CD4-positive, alpha-beta memory T cell (primary cell): ENCODE measurements at regions of chr16 and their contacts with region 1.

Region 1: DNA sequence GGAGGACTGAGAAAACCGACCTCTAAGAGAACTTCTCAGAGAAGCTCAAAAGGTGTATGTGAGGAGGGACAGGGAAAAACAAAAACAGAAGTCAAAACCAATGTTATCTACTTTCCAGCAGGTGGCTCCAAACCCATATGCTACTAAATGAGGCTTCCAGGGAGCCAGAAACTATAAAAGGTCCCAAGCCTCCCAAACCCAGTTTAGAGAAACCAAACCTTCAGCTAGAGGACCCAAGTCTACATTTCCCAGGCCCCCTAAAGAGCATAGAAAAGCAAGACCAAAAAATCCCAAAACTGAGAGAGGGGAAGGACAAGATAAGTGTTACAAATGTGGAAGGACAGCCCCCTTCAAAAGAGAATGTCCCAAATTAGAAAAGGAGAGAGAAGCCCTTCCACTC is 3.7 kb downstream of the HPR start:
- DNase-seq: peak in 4 of 5 donors; percentile 4 to 24 (median 9)
- H3K4me3 ChIP-seq: no peak overlapping the region
- H3K4me3 Mint-ChIP-seq: no peak overlapping the region
- H3K27ac ChIP-seq: no peak overlapping the region
- H3K27ac Mint-ChIP-seq: peak overlapping the region in 1 of 7 donors; percentile 29
- H3K4me1 ChIP-seq: no peaks in the 10 kb centered on the region
- H3K4me1 Mint-ChIP-seq: peaks cover 0 to 2% (median 0%) of the 10 kb centered on the region in 4 donors
- H3K27me3 ChIP-seq: no peaks in the 10 kb centered on the region
- H3K27me3 Mint-ChIP-seq: no peaks in the 10 kb centered on the region

Region 2: DNA sequence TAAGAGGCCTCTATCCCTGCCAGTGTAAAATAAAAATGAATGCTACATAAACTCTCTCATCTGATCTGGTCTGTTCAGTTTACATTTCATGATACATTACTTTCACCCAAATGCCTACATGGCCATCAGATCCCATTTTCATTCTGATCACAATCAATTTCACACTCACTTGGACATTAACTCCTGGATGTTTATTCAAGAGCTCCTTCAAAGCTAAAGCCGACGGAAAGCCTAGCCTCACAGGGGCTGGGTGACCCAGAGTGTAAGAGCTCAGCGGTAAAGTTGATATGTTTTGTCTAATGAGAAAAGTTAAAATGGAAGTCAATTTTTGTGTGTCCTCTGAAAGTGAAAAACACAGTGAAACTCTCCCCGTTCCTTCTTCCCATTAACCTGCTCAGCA is 87.1 kb before region 1 on chr16:
- CTCF ChIA-PET with region 1: no interaction called
- POLR2A ChIA-PET with region 1: no interaction called
- intact Hi-C with region 1: no loop called
- DNase-seq: no peak
- H3K4me3 ChIP-seq: no peak overlapping the region
- H3K4me3 Mint-ChIP-seq: no peak overlapping the region
- H3K27ac ChIP-seq: no peak overlapping the region
- H3K27ac Mint-ChIP-seq: no peak overlapping the region
- H3K4me1 ChIP-seq: no peaks in the 10 kb centered on the region
- H3K4me1 Mint-ChIP-seq: no peaks in the 10 kb centered on the region
- H3K27me3 ChIP-seq: no peaks in the 10 kb centered on the region
- H3K27me3 Mint-ChIP-seq: peaks cover 6 to 7% of the 10 kb centered on the region in 2 donors

Region 3: DNA sequence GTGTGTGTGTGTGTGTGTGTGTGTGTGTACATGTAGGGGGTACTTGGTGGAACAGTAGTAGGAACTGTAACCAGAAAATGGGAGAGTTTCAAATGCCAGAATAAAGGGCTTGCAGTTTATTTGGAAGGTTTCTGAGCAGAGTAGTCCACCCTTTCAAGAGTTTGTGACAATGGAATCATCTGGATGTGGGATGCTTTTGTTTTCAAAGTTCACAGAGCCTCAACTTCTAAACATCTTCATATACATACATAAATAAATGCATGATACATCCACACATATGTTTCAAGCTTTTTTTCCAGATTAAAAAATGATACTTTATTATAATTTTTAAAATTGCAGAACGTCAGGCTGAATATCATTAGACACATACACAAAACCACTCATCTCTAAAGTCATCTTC is 64.1 kb before region 1 on chr16:
- CTCF ChIA-PET with region 1: no interaction called
- POLR2A ChIA-PET with region 1: no interaction called
- intact Hi-C with region 1: no loop called
- DNase-seq: no peak
- H3K4me3 ChIP-seq: no peak overlapping the region
- H3K4me3 Mint-ChIP-seq: no peak overlapping the region
- H3K27ac ChIP-seq: no peak overlapping the region
- H3K27ac Mint-ChIP-seq: no peak overlapping the region
- H3K4me1 ChIP-seq: no peaks in the 10 kb centered on the region
- H3K4me1 Mint-ChIP-seq: no peaks in the 10 kb centered on the region
- H3K27me3 ChIP-seq: no peaks in the 10 kb centered on the region
- H3K27me3 Mint-ChIP-seq: peaks cover 7 to 16% of the 10 kb centered on the region in 2 donors

Region 4: GRCh38 chr16:72099377-72099818 is 32.7 kb after region 1 on chr16:
- CTCF ChIA-PET with region 1: interaction called, 5 read pairs
- POLR2A ChIA-PET with region 1: no interaction called
- intact Hi-C with region 1: loop called (anchors 1 kb)
- DNase-seq: peak; percentile 19 to 46 (median 38)
- H3K4me3 ChIP-seq: no peak overlapping the region
- H3K4me3 Mint-ChIP-seq: no peak overlapping the region
- H3K27ac ChIP-seq: no peak overlapping the region
- H3K27ac Mint-ChIP-seq: peak overlapping the region in 1 of 7 donors; percentile 83
- H3K4me1 ChIP-seq: peaks cover 18% of the 10 kb centered on the region
- H3K4me1 Mint-ChIP-seq: peaks cover 15 to 21% (median 17%) of the 10 kb centered on the region in 4 donors
- H3K27me3 ChIP-seq: no peaks in the 10 kb centered on the region
- H3K27me3 Mint-ChIP-seq: no peaks in the 10 kb centered on the region